ENCODE measurements at regions of chr10 and their contacts with region 1.

Region 1: GRCh38 chr10:63720072-63720537 is 198.9 kb downstream of the REEP3 start:
- DNase-seq: peak; percentile 56
- H3K4me3 ChIP-seq: no peak overlapping the region
- H3K27ac ChIP-seq: peak overlapping the region in 1 of 4 donors; percentile 65
- H3K4me1 ChIP-seq: peaks cover 0 to 27% (median 0%) of the 10 kb centered on the region in 4 donors
- H3K27me3 ChIP-seq: no peaks in the 10 kb centered on the region
- CTCF ChIP-seq: peak; percentile 94 to 99 (median 98)
- EP300 ChIP-seq: no peak
- POLR2A ChIP-seq: no peak

Region 2: GRCh38 chr10:63166742-63167258 is 553.3 kb before region 1 on chr10:
- in situ Hi-C with region 1: loop called in 1 of 4 experiments (anchors 5 kb)
- intact Hi-C with region 1: loop called (anchors 5 kb)
- DNase-seq: no peak
- H3K4me3 ChIP-seq: no peak overlapping the region
- H3K27ac ChIP-seq: peak overlapping the region in 1 of 4 donors; percentile 19
- H3K4me1 ChIP-seq: peaks cover 0 to 12% (median 0%) of the 10 kb centered on the region in 4 donors
- H3K27me3 ChIP-seq: no peaks in the 10 kb centered on the region
- CTCF ChIP-seq: peak; percentile 61 to 83 (median 80)
- EP300 ChIP-seq: no peak
- POLR2A ChIP-seq: no peak

Region 3: DNA sequence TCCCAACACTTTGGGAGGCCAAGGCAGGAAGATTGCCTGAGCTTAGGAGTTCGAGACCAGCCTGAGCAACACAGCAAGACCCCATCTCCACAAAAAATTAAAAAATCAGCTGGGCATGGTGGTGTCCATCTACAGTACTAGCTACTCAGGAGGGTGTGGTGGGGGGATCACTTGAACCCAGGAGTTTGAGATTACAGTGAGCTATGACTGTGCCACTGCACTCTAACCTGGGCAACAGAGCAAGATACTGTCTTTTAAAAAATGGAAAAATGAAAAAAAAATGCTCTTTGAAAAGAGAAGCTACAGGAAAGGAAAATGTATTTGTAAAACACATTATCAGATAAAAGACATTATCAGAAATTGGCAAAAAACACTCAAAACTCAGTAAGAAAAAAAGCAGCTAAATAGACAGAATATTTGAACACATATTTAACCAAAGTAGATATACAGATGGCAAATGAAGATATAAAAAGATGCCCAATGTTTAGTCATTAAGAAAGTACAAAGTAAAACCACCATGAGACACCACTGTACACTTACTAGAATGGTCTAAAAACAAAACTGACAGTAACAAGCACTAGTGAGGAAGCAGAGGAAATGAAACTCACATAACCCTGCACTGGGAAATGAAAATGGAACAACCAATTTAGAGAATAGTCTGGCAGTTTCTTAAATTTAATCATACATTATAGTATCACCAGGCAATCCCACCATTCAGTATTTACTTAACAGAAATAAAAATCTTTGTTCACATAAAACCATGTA is 546.5 kb before region 1 on chr10:
- in situ Hi-C with region 1: loop called in 1 of 4 experiments (anchors 5 kb)
- intact Hi-C with region 1: loop called (anchors 5 kb)
- DNase-seq: no peak
- H3K4me3 ChIP-seq: no peak overlapping the region
- H3K27ac ChIP-seq: no peak overlapping the region
- H3K4me1 ChIP-seq: peaks cover 0 to 12% (median 0%) of the 10 kb centered on the region in 4 donors
- H3K27me3 ChIP-seq: no peaks in the 10 kb centered on the region
- CTCF ChIP-seq: no peak
- EP300 ChIP-seq: no peak
- POLR2A ChIP-seq: no peak

Region 4: DNA sequence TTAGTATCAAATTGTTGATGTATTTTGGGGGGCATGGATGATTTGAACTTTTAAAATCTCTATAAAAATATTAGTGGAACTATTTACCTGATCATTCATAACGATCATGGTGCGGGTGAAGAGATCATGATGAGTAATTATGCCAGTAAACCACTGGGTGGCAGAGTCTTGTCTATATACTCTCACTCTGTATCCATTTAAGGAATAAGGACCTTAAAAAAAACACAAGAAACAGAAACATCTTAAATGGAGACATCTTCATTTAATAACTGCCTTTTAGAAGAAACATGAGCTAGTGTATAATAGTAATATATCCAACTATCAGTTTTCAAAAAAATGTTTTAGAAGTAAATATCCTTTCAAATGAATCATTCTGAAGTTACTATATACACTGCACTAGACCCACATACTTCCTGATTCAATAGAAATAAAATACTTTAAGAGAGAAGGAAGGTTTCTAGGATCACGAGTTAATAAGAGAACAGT is 502.9 kb before region 1 on chr10:
- in situ Hi-C with region 1: loop called in 3 of 4 experiments (anchors 5 to 25 kb)
- intact Hi-C with region 1: no loop called
- DNase-seq: no peak
- H3K4me3 ChIP-seq: no peak overlapping the region
- H3K27ac ChIP-seq: peak overlapping the region; percentile 18 to 55 (median 28)
- H3K4me1 ChIP-seq: peaks cover 5 to 23% (median 13%) of the 10 kb centered on the region in 4 donors
- H3K27me3 ChIP-seq: no peaks in the 10 kb centered on the region
- CTCF ChIP-seq: peak; percentile 66 to 91 (median 77)
- EP300 ChIP-seq: no peak
- POLR2A ChIP-seq: no peak

Region 5: DNA sequence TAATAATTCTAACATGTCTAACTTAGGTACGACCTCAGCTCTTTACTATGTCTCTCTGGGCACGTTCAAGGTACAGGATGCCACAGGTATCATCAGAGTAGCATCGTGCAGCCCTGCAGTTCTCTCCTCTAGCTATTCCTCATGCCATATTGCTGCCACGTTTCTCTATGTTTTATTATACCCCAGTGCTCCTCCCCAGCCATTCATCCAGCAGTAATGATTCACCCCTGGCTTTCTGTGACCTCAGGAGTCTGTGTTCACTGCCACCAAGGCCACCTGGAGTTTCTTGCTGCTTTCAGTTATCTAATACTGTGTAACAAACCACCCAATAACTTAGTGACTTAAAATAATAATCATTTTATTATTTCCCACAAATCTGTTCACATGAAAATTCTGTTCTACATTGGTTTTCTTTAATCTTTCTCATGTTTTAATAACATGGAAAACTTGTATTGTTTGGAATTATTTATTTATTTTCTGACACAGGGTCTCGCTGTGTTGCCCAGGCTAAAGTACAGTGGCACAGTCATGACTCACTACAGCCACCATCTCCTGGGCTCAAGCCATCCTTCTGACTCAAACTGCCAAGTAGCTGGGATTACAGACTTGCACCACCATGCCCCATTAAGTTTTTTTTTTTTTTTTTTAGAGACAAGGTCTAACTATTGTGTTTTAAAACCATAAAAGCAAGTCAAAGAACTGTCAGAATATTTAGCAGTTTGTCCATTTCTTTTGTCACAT is 177.1 kb before region 1 on chr10:
- in situ Hi-C with region 1: no loop called
- intact Hi-C with region 1: no loop called
- DNase-seq: no peak
- H3K4me3 ChIP-seq: no peak overlapping the region
- H3K27ac ChIP-seq: no peak overlapping the region
- H3K4me1 ChIP-seq: peaks cover 0 to 17% (median 8%) of the 10 kb centered on the region in 4 donors
- H3K27me3 ChIP-seq: no peaks in the 10 kb centered on the region
- CTCF ChIP-seq: no peak
- EP300 ChIP-seq: no peak
- POLR2A ChIP-seq: no peak

Region 6: GRCh38 chr10:64219271-64220025 is 499.3 kb after region 1 on chr10:
- in situ Hi-C with region 1: no loop called
- intact Hi-C with region 1: no loop called
- DNase-seq: no peak
- H3K4me3 ChIP-seq: no peak overlapping the region
- H3K27ac ChIP-seq: no peak overlapping the region
- H3K4me1 ChIP-seq: no peaks in the 10 kb centered on the region
- H3K27me3 ChIP-seq: no peaks in the 10 kb centered on the region
- CTCF ChIP-seq: no peak
- EP300 ChIP-seq: no peak
- POLR2A ChIP-seq: no peak

Region 7: DNA sequence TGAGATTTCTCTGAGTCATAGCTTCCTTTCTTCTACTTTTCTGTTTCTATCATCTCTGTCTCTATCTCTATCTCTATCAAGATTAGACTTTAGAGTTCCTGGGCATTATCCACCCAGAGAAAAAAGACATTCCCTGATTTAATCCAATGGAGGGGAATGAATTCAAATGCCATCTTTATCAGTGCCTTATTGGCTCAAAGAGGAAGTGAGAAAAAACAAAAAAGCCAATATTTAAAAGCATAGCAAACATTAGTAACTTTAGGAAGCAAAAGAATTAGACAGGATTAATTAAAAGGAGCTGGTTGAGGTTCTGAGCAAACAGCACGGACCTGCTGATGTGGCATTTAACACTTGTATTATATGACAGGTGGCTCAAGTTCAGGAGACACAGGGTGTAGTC is 537.6 kb after region 1 on chr10:
- in situ Hi-C with region 1: no loop called
- intact Hi-C with region 1: no loop called
- DNase-seq: no peak
- H3K4me3 ChIP-seq: no peak overlapping the region
- H3K27ac ChIP-seq: no peak overlapping the region
- H3K4me1 ChIP-seq: no peaks in the 10 kb centered on the region
- H3K27me3 ChIP-seq: no peaks in the 10 kb centered on the region
- CTCF ChIP-seq: no peak
- EP300 ChIP-seq: no peak
- POLR2A ChIP-seq: no peak

Measured in transverse colon (tissue), 4 donors.